ENCODE measurements at regions of chr15 and their contacts with region 1.

Region 1: DNA sequence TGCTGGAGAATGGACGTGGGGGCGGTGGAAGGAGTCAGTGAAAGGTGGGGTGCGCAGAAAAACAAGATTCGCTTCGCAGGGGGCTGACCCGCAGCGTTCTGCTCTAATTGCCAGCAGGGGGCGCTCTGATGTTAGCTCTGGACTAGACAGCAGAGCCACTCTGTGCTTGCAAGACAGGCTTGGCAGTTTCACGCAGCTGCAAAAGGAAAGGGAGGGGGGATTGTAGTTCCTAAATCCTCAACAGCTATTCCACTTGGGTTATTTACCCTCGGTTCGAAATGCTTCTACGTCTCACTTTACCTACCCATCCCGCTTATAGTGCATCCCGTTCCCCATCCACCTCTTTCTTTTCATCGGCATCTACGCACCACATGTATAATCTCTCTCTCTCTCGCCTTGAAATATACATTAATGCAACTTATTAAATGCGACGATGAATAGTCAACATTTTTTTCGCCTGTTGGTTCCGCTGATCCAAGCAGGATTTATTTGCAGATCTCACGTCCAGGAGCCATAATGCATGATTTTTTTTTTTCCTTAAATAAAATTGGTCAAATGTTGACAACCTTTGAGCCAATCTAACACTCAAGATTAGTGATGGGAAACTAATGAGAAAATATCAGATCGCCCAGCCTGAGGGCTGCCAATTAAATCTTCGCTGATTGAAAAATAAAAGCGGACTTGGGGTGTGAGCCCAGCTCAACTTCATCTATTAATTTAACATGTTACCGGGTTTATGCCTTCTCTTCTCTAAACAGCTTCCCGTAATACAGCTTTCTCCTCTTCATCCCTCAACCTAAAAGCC is 216.4 kb downstream of the MEIS2 start:
- DNase-seq: peak; percentile 87 to 95 (median 93)
- H3K4me3 ChIP-seq: peak overlapping the region in 2 of 4 donors; percentile 6 to 40
- H3K27ac ChIP-seq: no peak overlapping the region
- H3K4me1 ChIP-seq: peaks cover 0 to 4% of the 10 kb centered on the region in 2 donors
- H3K27me3 ChIP-seq: peaks cover 25% of the 10 kb centered on the region
- CTCF ChIP-seq: peak; percentile 79 to 92 (median 85)
- POLR2A ChIP-seq: no peak

Region 2: GRCh38 chr15:36501063-36501678 is 382.7 kb before region 1 on chr15:
- intact Hi-C with region 1: loop called (anchors 5 to 10 kb)
- DNase-seq: peak in 6 of 7 donors; percentile 38 to 56 (median 50)
- H3K4me3 ChIP-seq: no peak overlapping the region
- H3K27ac ChIP-seq: peak overlapping the region in 1 of 5 donors; percentile 35
- H3K4me1 ChIP-seq: no peaks in the 10 kb centered on the region
- H3K27me3 ChIP-seq: no peaks in the 10 kb centered on the region
- CTCF ChIP-seq: peak; percentile 58 to 91 (median 82)
- POLR2A ChIP-seq: no peak

Region 3: GRCh38 chr15:36965570-36966342 is 81.8 kb after region 1 on chr15:
- intact Hi-C with region 1: no loop called
- DNase-seq: no peak
- H3K4me3 ChIP-seq: no peak overlapping the region
- H3K27ac ChIP-seq: peak overlapping the region in 1 of 5 donors; percentile 4
- H3K4me1 ChIP-seq: peaks cover 7 to 35% of the 10 kb centered on the region in 2 donors
- H3K27me3 ChIP-seq: no peaks in the 10 kb centered on the region
- CTCF ChIP-seq: no peak
- POLR2A ChIP-seq: no peak

Region 4: GRCh38 chr15:37100109-37100965 is 216.4 kb after region 1 on chr15 and contains the start of gene MEIS2:
- intact Hi-C with region 1: loop called (anchors 10 kb)
- DNase-seq: peak; percentile 92 to 98 (median 96)
- H3K4me3 ChIP-seq: peak within 1 kb of the TSS; percentile 44 to 85 (median 70)
- H3K27ac ChIP-seq: peak within 1 kb of the TSS; percentile 95 to 99 (median 98)
- H3K4me1 ChIP-seq: peaks cover 0 to 7% of the 10 kb centered on the region in 2 donors
- H3K27me3 ChIP-seq: no peaks in the 10 kb centered on the region
- CTCF ChIP-seq: peak in 1 of 6 experiments; percentile 24
- POLR2A ChIP-seq: peak; percentile 81 to 89
- total RNA-seq, gene MEIS2: 45.0 to 139 (median 77.9) TPM

Region 5: DNA sequence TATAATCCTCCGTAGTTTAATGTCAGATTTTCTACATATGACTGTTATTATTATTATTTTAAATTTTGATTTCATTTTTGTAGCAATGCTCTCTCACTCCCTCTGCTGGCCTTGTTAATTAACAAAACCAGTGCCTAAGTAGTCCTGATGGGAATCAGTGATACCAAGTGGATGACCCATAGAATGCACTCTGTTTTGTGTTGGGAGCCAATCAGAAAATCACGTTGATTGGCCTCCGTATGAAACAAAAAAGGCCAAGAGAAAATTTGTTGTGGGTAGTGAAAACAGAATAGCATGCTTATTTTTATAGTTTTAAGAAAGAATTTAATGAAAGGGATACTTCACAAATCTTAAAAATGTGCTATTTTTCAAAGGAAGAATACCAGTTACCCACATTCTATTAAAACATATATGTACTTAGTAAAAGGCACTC is 250.8 kb after region 1 on chr15:
- intact Hi-C with region 1: loop called in 1 of 2 experiments (anchors 10 kb)
- DNase-seq: peak in 4 of 7 donors; percentile 15 to 47 (median 41)
- H3K4me3 ChIP-seq: no peak overlapping the region
- H3K27ac ChIP-seq: no peak overlapping the region
- H3K4me1 ChIP-seq: peaks cover 0 to 19% of the 10 kb centered on the region in 2 donors
- H3K27me3 ChIP-seq: no peaks in the 10 kb centered on the region
- CTCF ChIP-seq: peak; percentile 66 to 86 (median 80)
- POLR2A ChIP-seq: no peak

Region 6: GRCh38 chr15:37880009-37880834 is 996.3 kb after region 1 on chr15:
- intact Hi-C with region 1: loop called in 1 of 2 experiments (anchors 10 kb)
- DNase-seq: peak in 4 of 7 donors; percentile 9 to 55 (median 20)
- H3K4me3 ChIP-seq: no peak overlapping the region
- H3K27ac ChIP-seq: no peak overlapping the region
- H3K4me1 ChIP-seq: no peaks in the 10 kb centered on the region
- H3K27me3 ChIP-seq: peaks cover 5% of the 10 kb centered on the region
- CTCF ChIP-seq: peak; percentile 55 to 75 (median 66)
- POLR2A ChIP-seq: no peak

Measured in adrenal gland (tissue), 19 donors.